ENCODE measurements at regions of chr21 and their contacts with region 1.

Region 1: DNA sequence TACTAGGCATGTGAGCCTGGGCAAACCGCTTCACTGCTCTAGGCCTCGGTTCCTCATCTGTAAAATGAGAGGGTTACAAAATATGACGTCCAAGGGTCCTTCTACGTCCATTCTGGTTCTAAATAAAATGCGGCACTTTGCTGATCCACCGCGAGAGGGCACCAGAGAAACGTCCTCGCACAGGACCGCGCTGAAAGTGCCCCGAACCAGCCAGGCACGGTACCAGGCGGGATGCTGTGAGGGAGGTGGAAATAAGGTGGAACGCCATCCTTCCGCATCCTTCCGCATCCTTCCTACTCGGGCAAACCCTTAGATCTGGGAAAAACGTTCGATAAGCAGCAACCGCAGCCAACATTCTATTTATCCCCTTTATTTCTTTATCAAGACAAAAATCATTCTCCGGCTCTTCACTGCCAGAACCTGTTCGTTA is 60.3 kb upstream of the KRTAP19-8 start:
- DNase-seq: peak; percentile 28 to 72
- ATAC-seq: peak; percentile 66

Region 2: GRCh38 chr21:31180256-31181081 is 81.9 kb after region 1 on chr21:
- intact Hi-C with region 1: loop called in 1 of 2 experiments (anchors 5 kb)
- DNase-seq: no peak
- ATAC-seq: peak; percentile 42

Region 3: GRCh38 chr21:31293986-31294385 is 195.4 kb after region 1 on chr21:
- intact Hi-C with region 1: no loop called
- DNase-seq: no peak
- ATAC-seq: no peak

Region 4: DNA sequence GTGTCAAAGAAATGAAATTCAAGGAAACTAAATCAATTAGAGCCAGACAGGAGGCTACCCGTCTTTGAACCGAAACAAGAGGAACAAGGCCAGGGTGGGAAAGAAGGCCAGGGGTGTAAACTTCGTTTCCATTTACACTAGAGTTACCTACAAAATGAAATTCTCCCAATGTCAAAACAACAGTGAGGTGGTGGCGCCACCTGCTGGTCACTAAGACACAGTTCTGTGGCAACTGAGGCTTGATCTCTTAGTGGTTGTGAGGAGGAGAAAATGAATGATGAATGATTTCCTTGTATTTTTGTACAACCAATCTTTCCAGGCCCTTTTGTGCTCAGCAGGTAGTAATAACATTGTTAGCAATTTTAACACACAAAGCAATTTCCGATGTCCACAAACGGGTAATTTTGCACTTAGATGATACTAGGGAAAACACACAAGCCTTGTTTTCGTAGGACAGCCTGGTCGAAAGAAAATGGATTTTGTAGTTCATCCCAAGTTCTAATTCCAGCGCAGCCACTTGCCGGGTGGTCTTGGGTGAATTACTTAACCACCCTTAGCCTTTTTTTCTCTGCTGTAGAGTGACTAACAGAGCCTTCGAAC is 506.1 kb after region 1 on chr21:
- intact Hi-C with region 1: loop called in 1 of 2 experiments (anchors 10 kb)
- DNase-seq: peak; percentile 39 to 84
- ATAC-seq: peak; percentile 79